AG04450 (cell line): ENCODE measurements at regions of chr20 and their contacts with region 1.

Region 1: GRCh38 chr20:45450097-45450818 is 19.3 kb upstream of the WFDC2 start:
- DNase-seq: no peak
- H3K4me3 ChIP-seq: no peak overlapping the region
- H3K27ac ChIP-seq: no peak overlapping the region
- H3K27me3 ChIP-seq: peaks cover 18% of the 10 kb centered on the region
- CTCF ChIP-seq: peak; percentile 62

Region 2: GRCh38 chr20:45223136-45223535 is 227.1 kb before region 1 on chr20:
- CTCF ChIA-PET with region 1: no interaction called
- POLR2A ChIA-PET with region 1: no interaction called
- DNase-seq: no peak
- H3K4me3 ChIP-seq: no peak overlapping the region
- H3K27ac ChIP-seq: no peak overlapping the region
- H3K27me3 ChIP-seq: no peaks in the 10 kb centered on the region
- CTCF ChIP-seq: no peak

Region 3: GRCh38 chr20:45465491-45466266 is 15.4 kb after region 1 on chr20:
- CTCF ChIA-PET with region 1: interaction called, 15 read pairs
- POLR2A ChIA-PET with region 1: no interaction called
- DNase-seq: no peak
- H3K4me3 ChIP-seq: no peak overlapping the region
- H3K27ac ChIP-seq: no peak overlapping the region
- H3K27me3 ChIP-seq: peaks cover 35% of the 10 kb centered on the region
- CTCF ChIP-seq: no peak